Activated CD4-positive, alpha-beta T cell treated with anti-CD3 and anti-CD28 coated beads for 36 hours (primary cell): ENCODE measurements at regions of chr5 and their contacts with region 1.

Region 1: DNA sequence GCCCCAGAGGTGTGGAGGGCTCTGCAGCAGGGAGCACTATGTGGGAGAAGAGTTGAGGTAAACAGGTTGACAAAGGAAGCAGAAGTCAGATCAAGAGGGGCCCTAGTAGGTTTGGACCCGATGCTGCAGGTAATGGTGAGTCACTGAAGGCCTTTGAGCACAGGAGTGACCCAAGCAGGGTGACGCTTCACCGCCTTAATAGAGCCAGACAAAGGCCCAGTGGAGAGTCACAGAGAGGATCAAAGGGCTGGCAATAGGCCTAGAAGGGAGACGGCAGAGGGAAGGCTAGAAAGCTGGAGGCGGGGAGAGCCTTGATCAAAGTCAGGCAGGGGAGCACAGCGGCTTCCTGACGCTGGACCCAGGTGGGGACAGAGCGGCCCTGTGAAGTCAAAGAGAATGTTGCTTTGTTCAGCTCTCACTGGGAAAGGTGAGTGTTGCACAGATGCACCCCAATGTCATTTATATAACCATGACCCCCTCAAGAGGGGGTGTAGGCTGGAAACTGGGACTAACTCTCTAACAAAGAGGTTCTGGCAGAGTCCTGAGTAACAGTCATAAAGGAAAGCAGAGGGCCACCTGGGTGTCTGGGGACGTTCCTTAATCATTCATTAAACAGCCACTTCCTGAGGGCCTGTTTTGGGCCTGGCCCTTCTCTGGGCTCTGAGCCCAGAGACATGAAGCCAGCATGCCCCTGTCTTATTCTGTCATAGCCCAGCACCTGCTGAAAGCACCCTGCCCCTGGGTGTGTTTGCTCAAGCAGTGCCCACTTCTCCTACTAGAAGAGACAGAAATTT is 9.8 kb upstream of the CPLX2 start:
- DNase-seq: no peak
- ATAC-seq: no peak
- H3K4me3 Mint-ChIP-seq: no peak overlapping the region
- H3K27ac Mint-ChIP-seq: no peak overlapping the region
- H3K4me1 Mint-ChIP-seq: no peaks in the 10 kb centered on the region
- H3K27me3 Mint-ChIP-seq: no peaks in the 10 kb centered on the region

Region 2: GRCh38 chr5:174910245-174910737 is 951.2 kb before region 1 on chr5:
- CTCF ChIA-PET with region 1: no interaction called
- POLR2A ChIA-PET with region 1: no interaction called
- intact Hi-C with region 1: no loop called
- DNase-seq: peak; percentile 75
- ATAC-seq: peak; percentile 66
- H3K4me3 Mint-ChIP-seq: no peak overlapping the region
- H3K27ac Mint-ChIP-seq: no peak overlapping the region
- H3K4me1 Mint-ChIP-seq: no peaks in the 10 kb centered on the region
- H3K27me3 Mint-ChIP-seq: peaks cover 35% of the 10 kb centered on the region

Region 3: GRCh38 chr5:175889910-175890684 is 28.6 kb after region 1 on chr5:
- CTCF ChIA-PET with region 1: interaction called, 3 read pairs
- POLR2A ChIA-PET with region 1: no interaction called
- intact Hi-C with region 1: loop called in 1 of 2 experiments (anchors 1 kb)
- DNase-seq: no peak
- ATAC-seq: no peak
- H3K4me3 Mint-ChIP-seq: no peak overlapping the region
- H3K27ac Mint-ChIP-seq: no peak overlapping the region
- H3K4me1 Mint-ChIP-seq: peaks cover 5% of the 10 kb centered on the region
- H3K27me3 Mint-ChIP-seq: no peaks in the 10 kb centered on the region